PC-3 (cell line): ENCODE measurements at regions of chr3 and their contacts with region 1.

Region 1: DNA sequence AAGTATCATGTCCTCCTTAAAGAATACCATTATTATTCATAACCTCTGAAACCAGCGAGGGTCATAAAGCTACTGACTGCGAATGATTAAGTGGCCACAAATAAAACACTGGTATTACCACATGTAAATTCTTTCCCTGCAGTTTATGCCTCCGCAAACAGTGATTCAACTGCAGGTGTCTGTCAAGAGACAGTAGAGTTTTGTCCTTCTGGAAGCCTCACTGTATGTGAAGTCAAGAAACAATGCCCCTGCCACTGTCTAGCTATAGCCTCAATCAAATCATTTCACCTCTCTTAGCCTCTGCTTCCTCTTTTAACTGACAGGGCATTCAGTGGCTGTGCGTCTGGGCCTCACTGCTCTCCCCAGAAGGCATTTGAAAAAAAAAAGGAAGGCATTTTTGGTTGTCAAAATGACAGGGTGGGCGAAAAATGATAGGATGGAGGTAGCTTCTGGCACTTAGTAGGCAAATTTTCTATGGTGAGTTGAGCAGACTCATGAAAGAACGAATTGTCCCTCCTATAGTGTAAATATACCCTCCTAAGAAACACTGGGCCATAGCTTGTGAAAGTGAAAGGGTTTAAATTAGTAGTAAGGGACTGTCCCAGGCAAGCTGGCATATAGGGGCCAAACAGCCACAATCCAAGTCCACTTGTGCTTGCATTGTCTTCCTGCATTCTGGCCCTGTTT is 66.7 kb downstream of the FILIP1L start:
- DNase-seq: peak; percentile 98
- ATAC-seq: peak; percentile 96
- H3K4me3 ChIP-seq: peak overlapping the region; percentile 39
- H3K27ac ChIP-seq: peak overlapping the region; percentile 86
- H3K4me1 ChIP-seq: peaks cover 48% of the 10 kb centered on the region
- H3K27me3 ChIP-seq: no peaks in the 10 kb centered on the region
- CTCF ChIP-seq: no peak

Region 2: GRCh38 chr3:99859825-99860224 is 187.8 kb before region 1 on chr3:
- CTCF ChIA-PET with region 1: no interaction called
- POLR2A ChIA-PET with region 1: no interaction called
- intact Hi-C with region 1: loop called (anchors 2 kb)
- DNase-seq: peak; percentile 93
- ATAC-seq: peak; percentile 70
- H3K4me3 ChIP-seq: no peak overlapping the region
- H3K27ac ChIP-seq: peak overlapping the region; percentile 49
- H3K4me1 ChIP-seq: peaks cover 49% of the 10 kb centered on the region
- H3K27me3 ChIP-seq: no peaks in the 10 kb centered on the region
- CTCF ChIP-seq: no peak

Region 3: DNA sequence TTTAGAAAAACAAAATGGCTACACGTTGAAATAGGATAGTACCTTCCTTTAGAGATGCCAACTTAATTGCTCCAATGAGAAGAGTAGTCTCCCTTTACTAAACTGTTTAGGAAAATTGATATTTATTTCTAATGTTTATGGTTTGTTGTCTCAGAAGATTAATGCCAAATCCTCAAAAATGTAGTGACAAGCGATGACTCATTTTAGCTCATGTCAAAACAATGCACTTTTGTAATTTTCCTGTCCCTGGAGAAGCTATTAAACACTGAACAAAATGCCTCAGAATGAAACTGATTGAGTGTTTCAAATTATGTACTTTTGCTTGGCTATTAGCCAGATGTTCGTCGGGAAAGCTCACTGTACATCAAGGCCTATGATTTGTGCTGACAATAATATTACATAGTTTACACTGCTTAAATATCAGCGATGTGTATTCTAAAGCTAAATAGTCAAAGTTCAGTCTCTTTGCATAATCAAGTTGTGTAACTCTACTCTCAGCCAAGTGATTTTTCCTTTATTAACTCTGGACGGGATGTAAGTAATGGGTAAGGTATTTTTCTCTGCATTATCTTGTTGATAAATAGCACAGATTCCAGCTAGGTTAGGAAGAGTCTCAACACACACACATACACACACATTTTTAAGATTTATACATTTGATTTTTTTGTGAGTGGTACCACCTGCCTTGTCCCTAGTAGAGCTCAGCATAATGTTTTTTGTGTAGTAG is 146.2 kb before region 1 on chr3:
- CTCF ChIA-PET with region 1: no interaction called
- POLR2A ChIA-PET with region 1: interaction called, 7 read pairs
- intact Hi-C with region 1: loop called (anchors 1 kb)
- DNase-seq: peak; percentile 98
- ATAC-seq: peak; percentile 82
- H3K4me3 ChIP-seq: peak overlapping the region; percentile 37
- H3K27ac ChIP-seq: peak overlapping the region; percentile 82
- H3K4me1 ChIP-seq: peaks cover 47% of the 10 kb centered on the region
- H3K27me3 ChIP-seq: no peaks in the 10 kb centered on the region
- CTCF ChIP-seq: no peak

Region 4: GRCh38 chr3:99909714-99910494 is 137.7 kb before region 1 on chr3:
- CTCF ChIA-PET with region 1: interaction called, 4 read pairs
- POLR2A ChIA-PET with region 1: no interaction called
- intact Hi-C with region 1: loop called (anchors 1 kb)
- DNase-seq: peak; percentile 98
- ATAC-seq: peak; percentile 94
- H3K4me3 ChIP-seq: peak overlapping the region; percentile 50
- H3K27ac ChIP-seq: peak overlapping the region; percentile 87
- H3K4me1 ChIP-seq: peaks cover 55% of the 10 kb centered on the region
- H3K27me3 ChIP-seq: no peaks in the 10 kb centered on the region
- CTCF ChIP-seq: no peak

Region 5: GRCh38 chr3:100002599-100003350 is 44.8 kb before region 1 on chr3:
- CTCF ChIA-PET with region 1: no interaction called
- POLR2A ChIA-PET with region 1: no interaction called
- intact Hi-C with region 1: loop called (anchors 2 kb)
- DNase-seq: peak; percentile 91
- ATAC-seq: peak; percentile 89
- H3K4me3 ChIP-seq: no peak overlapping the region
- H3K27ac ChIP-seq: 0 out of 2 replicates have a peak overlapping the region, but pooled peaks have one; percentile 9
- H3K4me1 ChIP-seq: peaks cover 39% of the 10 kb centered on the region
- H3K27me3 ChIP-seq: no peaks in the 10 kb centered on the region
- CTCF ChIP-seq: no peak

Region 6: DNA sequence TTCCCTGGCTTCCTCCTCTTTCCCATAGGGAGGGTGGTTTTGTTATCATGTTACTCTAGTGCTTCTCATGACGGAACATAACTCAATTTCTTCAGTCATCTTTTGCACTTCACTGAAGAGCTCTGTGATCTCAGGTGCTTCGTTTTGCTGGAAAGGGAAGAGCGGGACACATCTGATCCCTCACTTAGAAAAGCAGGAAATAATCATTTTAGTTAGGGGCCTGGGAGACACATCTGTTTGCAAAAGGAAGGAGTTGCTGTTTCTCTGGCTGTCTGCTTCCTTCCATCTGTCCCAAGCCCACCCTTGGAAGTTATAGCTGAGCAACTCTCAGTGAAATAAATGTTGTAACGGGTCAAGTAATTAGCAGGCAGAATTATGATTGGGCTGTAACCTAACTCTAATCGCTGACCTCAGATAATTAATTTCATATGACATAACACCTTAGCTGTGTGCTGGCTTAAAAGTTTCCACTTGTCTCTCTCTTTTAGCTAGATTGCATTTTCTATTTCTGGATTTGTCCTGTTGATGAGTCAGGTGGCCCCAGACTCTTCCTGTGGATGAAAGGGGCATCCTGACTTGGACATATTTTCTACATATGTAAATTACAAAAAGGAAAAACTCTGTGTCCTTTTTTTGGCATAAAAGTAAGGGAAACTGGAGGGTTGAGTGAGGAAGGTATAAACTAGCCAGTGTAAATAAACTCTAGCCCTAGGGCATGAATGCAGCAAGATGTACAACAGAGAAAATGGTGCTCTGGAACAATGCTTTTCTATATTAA is 77.8 kb after region 1 on chr3:
- CTCF ChIA-PET with region 1: no interaction called
- POLR2A ChIA-PET with region 1: no interaction called
- intact Hi-C with region 1: no loop called
- DNase-seq: peak; percentile 74
- ATAC-seq: peak; percentile 96
- H3K4me3 ChIP-seq: no peak overlapping the region
- H3K27ac ChIP-seq: peak overlapping the region; percentile 3; the same call in 1 of the 2 replicates
- H3K4me1 ChIP-seq: peaks cover 16% of the 10 kb centered on the region
- H3K27me3 ChIP-seq: no peaks in the 10 kb centered on the region
- CTCF ChIP-seq: no peak